CD4-positive, alpha-beta memory T cell (primary cell): ENCODE measurements at regions of chr2 and their contacts with region 1.

Region 1: GRCh38 chr2:85826990-85827878 is 61.6 kb downstream of the ST3GAL5 start:
- DNase-seq: peak; percentile 77 to 80 (median 79)
- H3K4me3 ChIP-seq: no peak overlapping the region
- H3K4me3 Mint-ChIP-seq: peak overlapping the region in 4 of 8 donors; percentile 36 to 64 (median 57)
- H3K27ac ChIP-seq: no peak overlapping the region
- H3K27ac Mint-ChIP-seq: peak overlapping the region; percentile 23 to 74 (median 57)
- H3K4me1 ChIP-seq: peaks cover 14% of the 10 kb centered on the region
- H3K4me1 Mint-ChIP-seq: peaks cover 8 to 24% (median 18%) of the 10 kb centered on the region in 4 donors
- H3K27me3 ChIP-seq: no peaks in the 10 kb centered on the region
- H3K27me3 Mint-ChIP-seq: peaks cover 3 to 4% of the 10 kb centered on the region in 2 donors

Region 2: DNA sequence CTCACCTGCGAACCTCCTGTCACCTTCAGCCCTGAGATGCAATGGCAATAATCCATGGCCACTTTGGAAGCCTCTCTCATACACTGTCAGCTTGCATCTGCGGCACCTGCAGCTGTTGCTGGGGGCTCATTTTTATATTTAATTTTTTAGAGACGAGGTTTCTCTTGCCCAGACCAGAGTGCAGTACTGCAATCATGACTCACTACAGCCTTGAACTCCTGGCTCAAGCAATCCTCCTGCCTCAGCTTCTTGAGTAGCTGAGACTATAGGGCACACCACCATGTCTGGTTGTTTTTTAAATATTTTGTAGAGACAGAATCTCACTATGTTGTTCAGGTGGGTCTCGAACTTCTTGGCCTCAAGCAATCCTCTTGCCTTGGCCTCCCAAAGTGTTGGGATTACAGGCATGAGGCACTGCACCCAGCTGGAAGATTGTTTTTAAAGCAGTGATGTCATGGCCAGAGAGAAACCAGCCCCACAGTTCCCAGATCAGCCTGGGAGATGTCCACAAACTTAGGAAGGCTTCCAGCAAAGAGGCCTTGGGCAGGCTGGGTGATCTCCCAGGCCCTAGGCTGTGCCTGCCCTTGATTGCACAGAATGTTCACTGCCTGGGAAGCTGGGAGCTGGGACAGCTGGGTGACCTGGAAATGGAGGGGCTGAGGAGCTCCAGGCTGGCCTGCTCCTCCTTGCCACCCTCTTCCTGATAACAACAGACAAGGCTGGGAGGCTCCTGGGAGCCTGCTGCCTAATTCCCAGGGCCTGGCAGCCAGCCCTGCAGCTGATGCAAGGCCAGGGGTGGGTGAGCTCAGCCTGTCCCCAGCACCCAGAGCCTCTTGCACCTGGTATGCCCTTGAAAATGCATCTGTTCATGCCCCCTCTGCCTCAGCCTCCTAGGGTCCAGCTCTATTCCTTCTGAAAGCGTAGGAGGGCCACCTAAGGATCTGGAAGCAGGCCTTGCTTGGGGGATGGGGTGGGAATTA is 381.6 kb before region 1 on chr2:
- CTCF ChIA-PET with region 1: no interaction called
- POLR2A ChIA-PET with region 1: no interaction called
- intact Hi-C with region 1: no loop called
- DNase-seq: no peak
- H3K4me3 ChIP-seq: no peak overlapping the region
- H3K4me3 Mint-ChIP-seq: no peak overlapping the region
- H3K27ac ChIP-seq: no peak overlapping the region
- H3K27ac Mint-ChIP-seq: no peak overlapping the region
- H3K4me1 ChIP-seq: no peaks in the 10 kb centered on the region
- H3K4me1 Mint-ChIP-seq: no peaks in the 10 kb centered on the region
- H3K27me3 ChIP-seq: no peaks in the 10 kb centered on the region
- H3K27me3 Mint-ChIP-seq: no peaks in the 10 kb centered on the region

Region 3: GRCh38 chr2:85712849-85713602 is 114.2 kb before region 1 on chr2:
- CTCF ChIA-PET with region 1: no interaction called
- POLR2A ChIA-PET with region 1: no interaction called
- intact Hi-C with region 1: no loop called
- DNase-seq: no peak
- H3K4me3 ChIP-seq: no peak overlapping the region
- H3K4me3 Mint-ChIP-seq: no peak overlapping the region
- H3K27ac ChIP-seq: no peak overlapping the region
- H3K27ac Mint-ChIP-seq: no peak overlapping the region
- H3K4me1 ChIP-seq: peaks cover 5% of the 10 kb centered on the region
- H3K4me1 Mint-ChIP-seq: peaks cover 0 to 5% (median 5%) of the 10 kb centered on the region in 4 donors
- H3K27me3 ChIP-seq: peaks cover 3% of the 10 kb centered on the region
- H3K27me3 Mint-ChIP-seq: peaks cover 0 to 4% of the 10 kb centered on the region in 2 donors

Region 4: DNA sequence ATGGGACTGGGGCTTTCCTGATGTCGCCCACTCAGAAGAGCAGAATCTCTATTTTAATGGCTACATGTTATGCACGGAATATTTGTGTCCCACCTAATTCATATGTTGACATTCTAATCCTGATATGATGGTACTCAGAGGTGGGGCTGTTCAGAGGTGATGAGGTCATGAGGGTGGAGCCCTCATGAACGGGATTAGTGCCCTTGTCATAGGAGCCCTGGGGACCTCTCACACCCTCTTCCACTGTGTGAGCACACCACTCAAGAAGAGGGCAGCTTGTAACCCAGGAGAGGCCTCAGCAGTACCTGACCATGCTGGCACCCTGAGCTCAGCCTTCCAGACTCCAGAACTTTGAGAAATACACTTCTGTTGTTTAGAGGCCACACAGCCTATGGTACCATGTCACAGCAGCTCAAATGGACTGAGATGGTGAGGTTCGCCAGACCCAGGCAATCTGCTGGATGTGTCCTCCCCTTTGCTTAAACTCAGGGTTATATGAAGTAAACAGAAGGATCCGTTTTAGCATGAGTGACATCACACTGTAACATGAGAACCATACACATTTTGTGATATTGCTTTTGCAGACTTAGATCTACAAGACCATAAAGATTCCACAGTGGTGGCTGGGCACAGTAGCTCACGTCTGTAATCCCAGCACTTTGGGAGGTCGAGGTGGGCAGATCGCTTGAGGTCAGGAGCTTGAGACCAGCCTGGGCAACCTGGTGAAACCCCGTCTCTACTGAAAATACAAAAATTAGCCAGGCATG is 24.7 kb before region 1 on chr2:
- CTCF ChIA-PET with region 1: no interaction called
- POLR2A ChIA-PET with region 1: no interaction called
- intact Hi-C with region 1: no loop called
- DNase-seq: no peak
- H3K4me3 ChIP-seq: no peak overlapping the region
- H3K4me3 Mint-ChIP-seq: no peak overlapping the region
- H3K27ac ChIP-seq: no peak overlapping the region
- H3K27ac Mint-ChIP-seq: no peak overlapping the region
- H3K4me1 ChIP-seq: peaks cover 8% of the 10 kb centered on the region
- H3K4me1 Mint-ChIP-seq: peaks cover 5 to 13% (median 8%) of the 10 kb centered on the region in 4 donors
- H3K27me3 ChIP-seq: peaks cover 5% of the 10 kb centered on the region
- H3K27me3 Mint-ChIP-seq: peaks cover 8 to 12% of the 10 kb centered on the region in 2 donors

Region 5: DNA sequence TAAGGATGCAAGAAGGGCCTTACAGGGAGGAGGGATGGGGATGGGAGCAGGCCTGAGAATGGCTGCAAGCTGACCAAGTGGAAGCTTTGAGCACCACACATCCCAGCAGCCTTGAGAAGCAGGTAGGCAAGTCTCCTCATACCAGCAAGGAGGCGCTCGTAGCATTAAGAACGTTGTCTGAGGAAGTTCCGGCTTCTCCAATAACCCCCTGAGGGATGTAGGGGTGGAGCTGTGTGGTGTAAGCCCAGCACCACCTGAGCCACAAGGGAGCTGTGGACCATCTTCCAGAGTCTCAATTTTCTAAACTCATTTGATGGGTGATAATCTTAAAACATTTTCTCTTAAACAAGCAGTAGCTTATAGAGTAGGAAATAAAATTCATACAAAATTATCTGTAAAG is 10.9 kb after region 1 on chr2:
- CTCF ChIA-PET with region 1: interaction called, 25 read pairs
- POLR2A ChIA-PET with region 1: interaction called, 5 read pairs
- intact Hi-C with region 1: no loop called
- DNase-seq: no peak
- H3K4me3 ChIP-seq: no peak overlapping the region
- H3K4me3 Mint-ChIP-seq: no peak overlapping the region
- H3K27ac ChIP-seq: no peak overlapping the region
- H3K27ac Mint-ChIP-seq: peak overlapping the region in 2 of 7 donors; percentile 47 to 88
- H3K4me1 ChIP-seq: peaks cover 3% of the 10 kb centered on the region
- H3K4me1 Mint-ChIP-seq: peaks cover 7 to 20% (median 15%) of the 10 kb centered on the region in 4 donors
- H3K27me3 ChIP-seq: no peaks in the 10 kb centered on the region
- H3K27me3 Mint-ChIP-seq: no peaks in the 10 kb centered on the region

Region 6: GRCh38 chr2:85858841-85859240 is 31.6 kb after region 1 on chr2:
- CTCF ChIA-PET with region 1: interaction called, 84 read pairs
- POLR2A ChIA-PET with region 1: interaction called, 20 read pairs
- intact Hi-C with region 1: no loop called
- DNase-seq: no peak
- H3K4me3 ChIP-seq: no peak overlapping the region
- H3K4me3 Mint-ChIP-seq: no peak overlapping the region
- H3K27ac ChIP-seq: no peak overlapping the region
- H3K27ac Mint-ChIP-seq: peak overlapping the region in 6 of 7 donors; percentile 6 to 83 (median 42)
- H3K4me1 ChIP-seq: peaks cover 55% of the 10 kb centered on the region
- H3K4me1 Mint-ChIP-seq: peaks cover 50 to 87% (median 66%) of the 10 kb centered on the region in 4 donors
- H3K27me3 ChIP-seq: no peaks in the 10 kb centered on the region
- H3K27me3 Mint-ChIP-seq: no peaks in the 10 kb centered on the region

Region 7: DNA sequence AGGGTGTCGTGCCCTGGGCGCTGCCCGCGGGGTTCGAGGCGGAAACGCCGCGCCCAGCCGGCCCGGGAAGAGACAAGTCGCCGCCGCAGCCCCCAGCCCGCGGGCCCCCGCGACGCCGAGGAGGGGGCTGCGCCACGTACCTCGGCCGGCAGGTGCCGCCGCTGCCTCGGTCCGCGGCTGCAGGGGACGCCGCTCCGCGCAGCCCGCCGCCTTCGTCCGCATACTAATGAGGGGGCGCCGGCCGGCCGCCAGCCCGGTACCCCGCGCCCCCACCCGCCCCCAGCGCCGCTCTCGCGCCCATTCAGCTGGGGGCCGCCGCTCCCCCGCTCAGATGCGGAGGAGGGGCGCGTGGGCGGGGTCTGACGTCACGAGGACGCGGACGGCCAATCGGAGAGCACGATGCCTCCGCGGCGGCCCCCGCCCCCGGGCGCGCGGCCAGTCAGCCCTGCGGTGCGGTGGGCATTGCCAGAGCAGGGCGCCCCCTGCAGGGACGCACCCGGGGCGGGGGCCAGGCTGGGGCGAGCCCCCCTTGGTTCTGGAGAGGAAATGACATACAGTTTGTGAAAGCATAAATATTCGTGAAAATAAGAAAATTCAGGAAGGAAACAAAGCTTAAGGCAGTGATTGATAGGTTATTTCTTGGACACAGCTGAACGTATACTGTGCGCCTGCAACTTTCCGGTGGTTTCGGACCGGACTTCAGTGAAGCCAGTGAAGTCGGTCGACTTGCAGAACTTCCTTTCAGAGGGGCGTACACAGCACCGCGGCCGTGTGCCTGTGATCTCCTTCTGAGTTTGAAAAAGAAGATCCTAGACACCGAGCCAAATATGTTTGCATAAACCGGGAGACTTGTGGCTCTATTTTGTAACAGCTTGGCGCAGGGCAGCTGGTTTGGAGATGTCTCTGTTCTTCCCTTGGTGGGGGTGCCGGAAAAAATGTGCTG is 61.7 kb after region 1 on chr2 and contains the start of gene ST3GAL5:
- CTCF ChIA-PET with region 1: interaction called, 275 read pairs
- POLR2A ChIA-PET with region 1: interaction called, 104 read pairs
- intact Hi-C with region 1: loop called (anchors 1 kb)
- DNase-seq: peak; percentile 89 to 94 (median 92)
- H3K4me3 ChIP-seq: peak within 1 kb of the TSS; percentile 87 to 96
- H3K4me3 Mint-ChIP-seq: peak within 1 kb of the TSS; percentile 94 to 98 (median 94)
- H3K27ac ChIP-seq: peak within 1 kb of the TSS; percentile 69
- H3K27ac Mint-ChIP-seq: peak within 1 kb of the TSS; percentile 94 to 99 (median 96)
- H3K4me1 ChIP-seq: peaks cover 48% of the 10 kb centered on the region
- H3K4me1 Mint-ChIP-seq: peaks cover 43 to 78% (median 58%) of the 10 kb centered on the region in 4 donors
- H3K27me3 ChIP-seq: no peaks in the 10 kb centered on the region
- H3K27me3 Mint-ChIP-seq: no peaks in the 10 kb centered on the region
- total RNA-seq, gene ST3GAL5: 37.1 to 41.7 TPM

Region 8: DNA sequence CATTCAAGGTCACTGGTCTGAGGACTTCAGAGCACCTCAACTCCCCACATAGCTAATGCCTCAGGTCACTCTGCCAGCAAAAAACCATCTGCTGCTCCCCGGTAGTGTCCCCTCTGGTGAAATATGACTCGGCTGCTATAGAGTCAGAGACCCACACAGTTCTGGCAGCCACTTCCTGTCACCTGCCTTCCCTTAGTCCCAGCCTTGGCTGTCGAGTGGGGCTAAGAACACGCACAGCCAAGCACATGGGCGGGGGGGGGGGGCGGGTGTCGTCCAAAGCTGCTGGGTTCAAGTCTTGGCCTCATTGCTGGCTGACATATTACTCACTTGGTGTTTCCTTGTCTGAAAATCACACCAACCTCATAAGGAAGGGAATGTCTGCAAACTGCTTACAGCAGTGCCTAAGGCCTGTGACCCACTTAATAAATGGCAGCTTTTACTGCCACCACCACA is 240.9 kb after region 1 on chr2:
- CTCF ChIA-PET with region 1: interaction called, 12 read pairs
- POLR2A ChIA-PET with region 1: no interaction called
- intact Hi-C with region 1: no loop called
- DNase-seq: peak; percentile 25 to 72 (median 33)
- H3K4me3 ChIP-seq: no peak overlapping the region
- H3K4me3 Mint-ChIP-seq: peak overlapping the region in 3 of 8 donors; percentile 8 to 60 (median 56)
- H3K27ac ChIP-seq: no peak overlapping the region
- H3K27ac Mint-ChIP-seq: peak overlapping the region in 6 of 7 donors; percentile 19 to 72 (median 49)
- H3K4me1 ChIP-seq: peaks cover 18% of the 10 kb centered on the region
- H3K4me1 Mint-ChIP-seq: peaks cover 9 to 21% (median 12%) of the 10 kb centered on the region in 4 donors
- H3K27me3 ChIP-seq: no peaks in the 10 kb centered on the region
- H3K27me3 Mint-ChIP-seq: no peaks in the 10 kb centered on the region

Region 9: DNA sequence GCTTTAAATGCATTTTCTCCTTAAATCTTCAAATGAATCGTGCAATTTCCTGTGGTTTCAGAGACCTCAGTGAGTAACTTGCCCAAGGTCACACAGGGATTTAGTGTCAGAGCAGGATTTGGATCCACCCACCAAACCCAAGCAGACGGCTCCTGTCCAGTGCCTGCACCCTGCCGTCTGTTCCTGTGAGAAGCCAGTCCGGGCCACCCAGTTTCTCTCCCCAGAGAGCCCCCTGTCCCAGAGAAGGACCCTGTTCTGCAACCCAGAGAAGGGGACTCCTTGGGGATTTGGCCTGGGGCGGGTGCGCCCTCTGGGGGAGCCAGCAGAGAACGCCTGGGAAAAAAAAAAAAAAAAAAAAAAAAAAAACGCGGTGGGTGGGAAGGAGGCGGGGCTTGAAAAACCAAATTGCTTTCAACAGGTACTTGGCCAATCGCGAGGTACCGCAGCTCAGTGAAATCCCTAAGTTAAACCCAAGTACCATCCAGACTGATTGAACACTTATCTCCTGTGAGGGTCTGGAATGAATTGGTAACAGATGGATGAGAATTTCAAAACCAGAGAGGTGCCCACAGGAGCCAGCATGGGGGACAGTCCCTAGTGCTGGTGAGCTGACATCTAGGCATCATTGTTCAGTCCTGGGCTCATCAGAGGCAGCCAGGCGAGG is 541.1 kb after region 1 on chr2:
- CTCF ChIA-PET with region 1: interaction called, 3 read pairs
- POLR2A ChIA-PET with region 1: no interaction called
- intact Hi-C with region 1: loop called (anchors 10 kb)
- DNase-seq: peak; percentile 33 to 39 (median 37)
- H3K4me3 ChIP-seq: peak overlapping the region in 1 of 2 donors; percentile 35
- H3K4me3 Mint-ChIP-seq: peak overlapping the region; percentile 37 to 76 (median 72)
- H3K27ac ChIP-seq: no peak overlapping the region
- H3K27ac Mint-ChIP-seq: peak overlapping the region in 6 of 7 donors; percentile 14 to 75 (median 31)
- H3K4me1 ChIP-seq: peaks cover 35% of the 10 kb centered on the region
- H3K4me1 Mint-ChIP-seq: peaks cover 26 to 58% (median 45%) of the 10 kb centered on the region in 4 donors
- H3K27me3 ChIP-seq: no peaks in the 10 kb centered on the region
- H3K27me3 Mint-ChIP-seq: no peaks in the 10 kb centered on the region